ENCODE measurements at regions of chr6 and their contacts with region 1.

Region 1: DNA sequence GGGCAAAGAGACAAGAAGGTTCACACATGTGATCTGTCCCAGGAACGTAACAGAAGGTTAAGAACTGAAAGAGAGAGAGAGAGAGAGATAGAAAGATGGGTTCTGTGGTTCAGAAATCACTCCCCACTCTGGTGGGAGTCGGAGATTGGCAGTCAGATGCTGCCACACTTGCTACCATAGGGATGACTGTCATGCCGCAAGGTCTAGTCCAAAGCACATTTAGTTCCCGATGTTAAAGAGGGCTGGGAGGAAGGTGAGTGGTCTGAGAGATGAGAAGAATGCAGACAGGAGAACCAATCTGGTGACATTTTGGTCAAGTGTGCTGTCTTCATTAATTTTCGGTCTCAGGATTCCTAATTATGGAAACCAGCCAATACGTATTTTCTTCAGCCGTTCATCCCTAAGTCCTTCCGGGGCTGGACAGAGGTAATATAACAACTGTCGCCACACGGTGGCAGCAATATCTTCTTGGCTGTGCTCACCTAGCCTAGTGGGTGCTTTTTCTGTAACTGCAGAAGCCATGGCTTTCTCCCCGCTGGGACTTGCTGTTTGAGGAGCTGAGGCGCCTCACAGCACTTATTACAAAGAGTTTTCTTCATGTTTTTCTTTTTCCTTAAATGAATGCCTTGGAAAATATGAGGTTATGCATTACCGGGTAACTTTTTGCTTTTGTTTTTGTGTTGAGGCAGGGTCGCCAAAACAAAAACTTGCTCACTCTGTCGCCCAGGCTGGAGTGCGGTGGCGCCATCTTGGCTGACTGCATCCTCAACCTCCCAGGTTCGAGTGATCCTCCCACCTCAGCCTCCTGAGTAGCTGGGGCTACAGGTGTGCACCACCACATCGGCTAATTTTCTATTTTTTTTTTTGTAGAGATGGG is 46.0 kb downstream of the SLC35D3 start:
- DNase-seq: no peak
- ATAC-seq: peak; percentile 58

Region 2: DNA sequence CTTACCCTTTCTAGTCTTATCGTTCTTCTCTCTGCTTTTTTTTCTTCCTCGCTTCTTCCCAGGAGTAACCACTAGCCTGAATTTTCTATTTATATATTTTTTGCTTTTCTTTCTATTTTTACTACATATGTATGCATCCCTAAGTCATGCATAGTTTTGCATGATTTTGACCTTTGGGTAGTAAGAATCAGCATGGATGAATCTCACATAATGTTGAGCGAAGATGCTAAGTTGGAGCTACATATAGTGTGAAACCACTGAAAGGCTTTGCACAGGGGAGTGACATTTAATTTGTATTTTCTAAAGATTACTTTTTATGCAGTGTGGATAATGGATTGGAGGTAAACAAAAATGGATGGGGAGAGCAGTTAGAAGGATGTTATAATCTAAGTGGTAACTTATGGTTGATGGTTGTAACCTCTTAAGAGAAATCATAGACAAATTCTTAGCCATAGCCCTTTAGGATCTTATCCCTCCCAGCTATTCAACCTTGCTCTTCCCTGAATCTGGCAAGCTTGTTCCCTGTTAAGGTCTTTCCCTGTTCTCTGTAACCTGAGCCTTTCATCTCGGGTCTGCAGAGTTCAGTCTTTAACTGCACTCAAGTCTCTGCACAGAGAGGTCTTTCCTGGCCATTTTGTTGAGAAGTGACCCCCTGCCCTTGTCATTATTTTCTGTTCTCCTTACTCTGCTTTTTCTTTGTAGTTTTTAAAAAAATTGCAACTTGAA is 127.7 kb before region 1 on chr6:
- intact Hi-C with region 1: loop called (anchors 5 kb)
- DNase-seq: no peak
- ATAC-seq: no peak

Region 3: DNA sequence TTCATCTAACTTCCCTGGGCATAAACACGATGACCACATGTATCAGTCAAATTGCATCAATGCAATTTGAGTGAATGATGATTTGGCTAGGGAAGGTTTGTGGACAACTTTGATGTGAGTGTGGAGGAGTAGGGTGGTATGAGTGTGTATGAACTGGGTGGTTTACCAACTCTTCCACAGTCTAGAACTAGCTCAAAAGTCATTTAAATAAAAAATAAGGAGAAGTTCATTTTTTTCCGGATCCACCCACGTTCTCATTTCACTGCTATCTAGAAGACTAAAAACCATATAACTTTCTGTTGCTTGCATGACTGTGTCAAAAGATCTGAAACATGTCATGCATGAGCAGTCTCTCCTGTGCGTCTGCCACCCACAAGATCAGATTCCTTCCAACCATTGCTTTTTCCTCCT is 22.4 kb before region 1 on chr6:
- intact Hi-C with region 1: no loop called
- DNase-seq: no peak
- ATAC-seq: no peak

Region 4: DNA sequence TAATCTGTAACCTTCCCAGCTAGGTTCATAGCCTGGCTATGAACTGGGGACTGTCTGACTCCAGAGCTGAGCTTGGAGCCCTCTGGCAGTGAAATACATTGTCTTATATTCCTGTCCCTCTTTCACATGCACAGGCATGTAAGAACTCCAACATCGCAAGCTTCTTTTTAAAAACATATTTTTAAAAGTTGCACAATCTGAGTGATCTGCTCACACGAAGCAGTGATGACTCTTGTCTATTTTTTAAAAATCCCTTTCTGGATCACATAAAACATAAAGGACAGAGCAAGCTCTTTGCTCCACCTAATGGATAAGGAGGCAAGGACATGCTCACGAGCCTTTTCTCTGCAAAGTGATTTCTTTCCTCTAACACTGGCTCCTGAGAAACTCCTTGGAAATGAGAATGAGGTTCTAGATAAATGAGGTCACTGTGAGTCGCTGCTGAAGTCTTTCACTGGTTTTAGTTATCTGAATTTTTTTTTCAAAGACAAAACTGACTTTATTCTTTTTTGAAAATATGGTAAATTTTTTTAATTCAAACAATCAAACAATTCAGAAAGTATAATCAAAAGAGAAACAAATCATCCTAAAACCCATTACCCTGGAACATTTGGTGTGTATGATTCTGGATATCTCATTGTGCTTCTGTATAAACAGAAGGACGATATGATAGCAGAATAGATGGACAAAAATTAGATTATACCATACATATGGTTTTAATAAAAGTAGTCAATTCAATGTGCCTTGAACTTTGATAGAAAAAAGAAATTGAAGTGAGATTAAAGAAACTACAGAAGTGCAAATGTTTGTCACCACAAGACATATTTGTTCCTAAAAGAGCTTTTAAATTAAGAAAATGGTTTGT is 45.9 kb after region 1 on chr6:
- intact Hi-C with region 1: loop called (anchors 2 kb)
- DNase-seq: no peak
- ATAC-seq: peak; percentile 81

Region 5: DNA sequence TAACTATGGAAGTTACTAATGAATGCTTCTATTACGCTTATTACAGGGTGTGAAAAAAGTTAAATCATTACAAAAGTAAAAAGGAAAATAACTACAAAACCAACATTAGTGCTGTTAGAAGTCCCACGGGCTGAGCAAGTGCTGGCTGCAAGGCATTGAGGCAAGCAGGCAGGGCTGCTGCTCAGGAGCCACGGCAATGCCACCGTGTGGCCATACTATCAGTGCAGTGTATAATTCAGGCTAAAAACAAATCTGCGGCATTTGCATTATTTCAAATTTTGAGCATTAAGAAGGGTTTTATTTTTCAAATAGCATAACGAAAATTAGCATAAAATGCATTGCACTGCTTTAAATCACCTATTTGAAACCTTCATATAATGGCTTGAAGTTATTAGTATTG is 234.0 kb after region 1 on chr6:
- intact Hi-C with region 1: loop called (anchors 10 kb)
- DNase-seq: no peak
- ATAC-seq: peak; percentile 80